PC-3 (cell line): ENCODE measurements at regions of chr7 and their contacts with region 1.

Region 1: DNA sequence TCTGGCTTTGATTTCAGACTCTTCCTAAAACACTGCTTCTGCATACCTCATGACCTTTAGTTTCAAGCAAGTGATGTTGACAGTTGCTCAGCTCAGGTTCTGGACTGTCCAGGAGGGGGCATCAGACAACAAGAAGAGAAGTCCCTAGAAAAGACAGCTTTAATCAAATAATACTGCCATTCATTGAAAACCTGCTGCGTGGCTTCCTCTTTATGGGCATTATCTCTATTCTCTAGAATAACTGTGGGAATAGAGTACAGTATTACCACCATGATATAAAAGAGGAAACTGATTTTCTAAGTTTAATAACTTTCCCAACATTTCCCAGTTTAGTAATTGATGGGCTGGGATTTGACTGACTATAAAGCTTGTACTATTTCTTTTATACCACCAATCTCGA is 170.4 kb downstream of the SNX13 start:
- DNase-seq: peak; percentile 79
- ATAC-seq: peak; percentile 78
- H3K4me3 ChIP-seq: no peak overlapping the region
- H3K27ac ChIP-seq: no peak overlapping the region
- H3K4me1 ChIP-seq: peaks cover 21% of the 10 kb centered on the region
- H3K27me3 ChIP-seq: no peaks in the 10 kb centered on the region
- CTCF ChIP-seq: peak; percentile 92

Region 2: DNA sequence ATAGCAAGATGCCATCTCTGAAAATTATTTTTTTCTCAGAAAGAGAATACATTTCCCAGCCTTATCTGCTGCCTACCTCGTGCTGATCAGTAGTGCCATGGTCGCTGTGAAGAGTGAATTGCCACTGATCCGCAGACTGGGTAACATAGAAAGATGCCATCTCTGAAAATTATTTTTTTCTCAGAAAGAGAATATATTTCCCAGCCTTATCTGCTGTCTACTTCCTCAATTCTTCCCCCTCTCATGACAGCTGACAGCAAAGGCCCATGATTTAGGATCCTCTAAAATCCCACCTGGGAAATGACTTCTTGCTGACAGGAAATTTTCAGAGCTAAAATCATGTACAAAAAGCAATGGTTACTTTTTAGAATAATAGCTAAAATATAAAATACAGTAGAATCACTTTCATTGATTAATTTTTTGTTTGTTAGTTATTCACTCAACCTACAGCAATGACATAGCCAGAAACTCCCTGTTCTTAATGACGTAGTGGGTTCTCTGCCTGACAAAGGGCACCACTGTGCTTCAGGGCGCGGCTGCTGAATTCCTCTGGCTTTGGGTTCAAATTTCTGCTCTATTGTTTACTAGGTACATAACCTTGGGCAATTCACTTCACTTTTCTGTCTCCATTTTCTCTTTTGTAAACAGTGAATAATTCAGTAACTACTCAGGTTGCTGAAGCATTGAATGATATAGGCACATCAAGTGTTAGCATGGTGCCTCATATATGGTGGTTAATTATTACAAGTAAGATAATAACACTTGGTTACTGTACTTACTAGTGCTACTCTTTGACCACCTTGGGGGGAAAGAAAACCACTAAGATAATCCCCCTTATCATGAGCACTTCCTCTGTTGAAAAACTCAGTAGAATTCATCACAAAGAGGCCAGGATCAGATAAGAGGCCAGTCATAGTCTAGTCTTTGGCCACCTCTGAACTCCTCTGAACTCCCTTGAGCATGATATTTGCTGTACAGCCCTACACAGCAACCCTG is 563.7 kb before region 1 on chr7:
- CTCF ChIA-PET with region 1: no interaction called
- POLR2A ChIA-PET with region 1: no interaction called
- intact Hi-C with region 1: no loop called
- DNase-seq: peak; percentile 93
- ATAC-seq: peak; percentile 98
- H3K4me3 ChIP-seq: no peak overlapping the region
- H3K27ac ChIP-seq: peak overlapping the region; percentile 97
- H3K4me1 ChIP-seq: peaks cover 27% of the 10 kb centered on the region
- H3K27me3 ChIP-seq: no peaks in the 10 kb centered on the region
- CTCF ChIP-seq: no peak

Region 3: GRCh38 chr7:17940302-17940883 is 170.5 kb after region 1 on chr7 and contains the start of gene SNX13:
- CTCF ChIA-PET with region 1: interaction called, 5 read pairs
- POLR2A ChIA-PET with region 1: no interaction called
- intact Hi-C with region 1: loop called (anchors 5 kb)
- DNase-seq: peak; percentile 89
- ATAC-seq: peak; percentile 80
- H3K4me3 ChIP-seq: peak within 1 kb of the TSS; percentile 94
- H3K27ac ChIP-seq: peak within 1 kb of the TSS; percentile 71
- H3K4me1 ChIP-seq: peaks cover 37% of the 10 kb centered on the region
- H3K27me3 ChIP-seq: no peaks in the 10 kb centered on the region
- CTCF ChIP-seq: no peak; the same call in none of the 2 replicates
- total RNA-seq, gene SNX13: 26.1 and 33.9 TPM in 2 replicates

Region 4: DNA sequence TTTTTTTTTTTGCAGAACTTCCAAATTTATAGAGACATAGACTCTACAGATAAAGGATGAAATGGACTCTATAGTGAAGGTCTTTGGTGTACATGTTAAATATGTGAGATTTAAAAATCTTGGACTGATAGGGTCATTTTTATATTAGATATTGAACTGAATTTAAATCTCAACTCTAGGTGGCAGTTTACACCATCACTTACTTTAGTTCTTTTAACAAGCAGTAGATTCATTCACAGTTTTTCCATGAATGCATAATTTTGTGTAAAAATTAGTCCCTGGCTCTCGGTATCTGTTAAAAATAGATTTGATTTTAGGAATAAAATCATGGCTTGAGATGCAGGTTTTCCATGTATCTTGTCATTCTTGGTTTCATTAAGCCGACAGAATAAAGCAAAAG is 201.5 kb after region 1 on chr7:
- CTCF ChIA-PET with region 1: interaction called, 9 read pairs
- POLR2A ChIA-PET with region 1: no interaction called
- intact Hi-C with region 1: loop called (anchors 2 kb)
- DNase-seq: peak; percentile 41
- ATAC-seq: no peak
- H3K4me3 ChIP-seq: no peak overlapping the region
- H3K27ac ChIP-seq: no peak overlapping the region
- H3K4me1 ChIP-seq: peaks cover 13% of the 10 kb centered on the region
- H3K27me3 ChIP-seq: no peaks in the 10 kb centered on the region
- CTCF ChIP-seq: peak; percentile 57

Region 5: GRCh38 chr7:18119985-18120384 is 350.1 kb after region 1 on chr7:
- CTCF ChIA-PET with region 1: interaction called, 3 read pairs
- POLR2A ChIA-PET with region 1: no interaction called
- intact Hi-C with region 1: loop called (anchors 2 kb)
- DNase-seq: peak; percentile 38
- ATAC-seq: peak; percentile 71
- H3K4me3 ChIP-seq: no peak overlapping the region
- H3K27ac ChIP-seq: no peak overlapping the region
- H3K4me1 ChIP-seq: no peaks in the 10 kb centered on the region
- H3K27me3 ChIP-seq: no peaks in the 10 kb centered on the region
- CTCF ChIP-seq: peak; percentile 64